ENCODE measurements at regions of chr13 and their contacts with region 1.

Region 1: DNA sequence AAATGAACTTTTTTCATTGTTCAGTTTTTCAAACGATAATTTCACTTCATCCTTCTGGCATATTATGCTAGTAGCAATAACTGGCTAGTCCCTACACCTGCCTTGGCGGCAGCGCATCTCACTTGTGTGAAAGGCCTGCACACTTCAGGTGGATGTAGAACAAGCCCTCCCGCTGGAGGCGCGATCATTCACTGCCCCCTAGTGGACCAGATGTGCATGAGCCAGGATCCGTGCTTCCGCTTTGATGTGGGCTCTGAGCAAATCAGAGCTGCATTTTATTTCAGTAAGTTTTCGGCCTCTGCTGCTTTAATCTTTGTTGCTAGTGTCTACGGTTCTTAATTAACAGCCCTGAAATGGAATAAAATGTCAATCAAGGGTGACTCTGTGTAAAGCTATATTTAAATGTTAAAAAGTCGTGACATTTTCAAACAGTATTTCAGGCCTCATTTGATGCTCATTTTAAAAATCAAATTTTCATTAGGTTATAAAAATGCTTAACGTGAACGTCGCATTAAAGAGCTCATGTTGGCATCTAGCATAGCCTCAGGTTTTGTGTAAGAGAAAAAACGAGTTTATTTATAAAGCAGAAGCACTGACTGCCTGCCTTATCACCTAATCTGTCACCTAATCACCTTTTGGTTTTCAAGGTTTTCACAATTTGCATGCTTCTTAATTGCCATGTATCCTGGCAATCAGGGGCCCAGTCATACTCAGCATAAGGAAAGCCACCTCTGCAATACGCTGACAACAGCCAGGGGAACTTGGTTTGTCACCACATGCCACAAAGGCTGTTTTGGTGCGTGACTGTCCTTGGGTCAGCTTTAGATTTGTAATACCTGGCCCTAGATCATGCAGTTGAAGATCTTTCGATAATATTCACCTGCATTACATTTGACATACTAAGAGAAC is 112.2 kb downstream of the TEX26 start:
- DNase-seq: no peak
- H3K4me3 ChIP-seq: no peak overlapping the region
- H3K27me3 ChIP-seq: no peaks in the 10 kb centered on the region
- CTCF ChIP-seq: peak; percentile 96

Region 2: GRCh38 chr13:30165796-30166195 is 878.8 kb before region 1 on chr13:
- CTCF ChIA-PET with region 1: no interaction called
- POLR2A ChIA-PET with region 1: no interaction called
- DNase-seq: no peak
- H3K4me3 ChIP-seq: no peak overlapping the region
- H3K27me3 ChIP-seq: peaks cover 5% of the 10 kb centered on the region
- CTCF ChIP-seq: no peak

Region 3: GRCh38 chr13:30808589-30808988 is 236.0 kb before region 1 on chr13:
- CTCF ChIA-PET with region 1: interaction called, 14 read pairs
- POLR2A ChIA-PET with region 1: no interaction called
- DNase-seq: no peak
- H3K4me3 ChIP-seq: no peak overlapping the region
- H3K27me3 ChIP-seq: no peaks in the 10 kb centered on the region
- CTCF ChIP-seq: no peak

Region 4: DNA sequence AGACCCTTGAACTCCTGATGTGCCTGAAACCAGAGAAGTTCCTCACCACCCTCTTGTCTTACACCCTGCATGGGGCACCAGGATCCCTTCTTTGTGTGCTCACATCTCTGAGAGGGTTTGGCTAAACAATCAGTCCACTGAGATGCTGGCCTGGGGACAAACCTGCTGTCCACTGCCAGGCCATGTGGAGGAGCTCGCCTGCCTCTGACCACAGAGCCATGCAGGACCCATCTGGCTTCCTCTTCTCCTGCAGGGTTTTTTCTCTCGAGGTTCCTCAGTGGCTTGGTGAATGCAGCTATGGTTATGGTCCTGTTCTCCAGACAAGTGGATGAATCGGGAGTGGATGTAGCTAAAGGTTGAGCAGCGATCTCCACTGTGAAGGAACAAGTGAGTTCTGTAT is 187.6 kb before region 1 on chr13:
- CTCF ChIA-PET with region 1: interaction called, 16 read pairs
- POLR2A ChIA-PET with region 1: no interaction called
- DNase-seq: no peak
- H3K4me3 ChIP-seq: no peak overlapping the region
- H3K27me3 ChIP-seq: no peaks in the 10 kb centered on the region
- CTCF ChIP-seq: peak; percentile 36

Region 5: DNA sequence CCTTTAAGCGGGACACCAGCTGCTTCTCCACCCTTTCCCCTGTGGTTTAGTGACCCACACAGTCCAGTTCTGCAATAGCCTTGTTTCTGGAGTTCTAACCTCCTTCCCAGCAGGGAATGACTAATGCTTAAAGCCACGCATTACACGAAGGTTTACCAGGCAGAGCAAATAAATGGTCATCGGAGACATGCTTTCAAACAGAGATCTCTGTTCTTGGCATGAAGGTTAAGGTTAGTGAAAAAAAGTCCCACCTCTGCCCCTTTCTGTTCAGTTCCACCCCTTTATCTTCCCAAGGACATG is 163.8 kb before region 1 on chr13:
- CTCF ChIA-PET with region 1: interaction called, 12 read pairs
- POLR2A ChIA-PET with region 1: interaction called, 3 read pairs
- DNase-seq: peak; percentile 79
- H3K4me3 ChIP-seq: no peak overlapping the region
- H3K27me3 ChIP-seq: no peaks in the 10 kb centered on the region
- CTCF ChIP-seq: no peak

Region 6: GRCh38 chr13:31032528-31033113 is 12.0 kb before region 1 on chr13:
- CTCF ChIA-PET with region 1: interaction called, 15 read pairs
- POLR2A ChIA-PET with region 1: no interaction called
- DNase-seq: no peak
- H3K4me3 ChIP-seq: no peak overlapping the region
- H3K27me3 ChIP-seq: peaks cover 6% of the 10 kb centered on the region
- CTCF ChIP-seq: no peak

Region 7: GRCh38 chr13:31081316-31081715 is 36.7 kb after region 1 on chr13:
- CTCF ChIA-PET with region 1: no interaction called
- POLR2A ChIA-PET with region 1: no interaction called
- DNase-seq: no peak
- H3K4me3 ChIP-seq: no peak overlapping the region
- H3K27me3 ChIP-seq: peaks cover 13% of the 10 kb centered on the region
- CTCF ChIP-seq: no peak

Region 8: DNA sequence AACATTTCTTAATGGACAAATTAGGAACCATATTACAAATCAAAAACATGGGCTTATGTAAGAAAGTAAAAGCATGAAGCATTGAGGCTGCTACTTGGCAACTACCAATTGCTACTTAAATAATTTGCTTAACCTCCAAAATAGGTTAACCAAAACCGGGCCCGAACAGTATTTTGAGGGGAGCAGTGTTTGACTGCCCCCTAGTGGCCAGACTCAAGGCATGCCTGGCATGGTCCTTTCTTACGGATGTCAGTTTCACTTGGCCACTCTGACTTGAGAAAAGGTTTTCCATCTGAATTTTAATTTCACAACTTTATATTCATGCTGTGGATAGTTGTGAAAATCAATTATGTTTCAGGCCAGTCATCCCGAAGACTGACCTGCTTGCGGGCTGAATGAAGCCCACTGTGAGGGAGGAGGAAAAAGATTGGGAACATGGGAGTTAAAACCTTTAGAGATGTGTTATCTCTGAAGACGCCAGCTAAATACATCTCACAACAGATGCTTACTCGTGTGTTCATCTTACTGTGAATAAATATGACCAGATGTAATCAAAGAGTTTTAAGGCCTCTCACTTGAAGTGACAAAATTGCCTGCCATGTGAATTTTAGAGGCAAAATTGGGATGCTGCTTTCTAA is 697.6 kb after region 1 on chr13:
- CTCF ChIA-PET with region 1: no interaction called
- POLR2A ChIA-PET with region 1: no interaction called
- DNase-seq: no peak
- H3K4me3 ChIP-seq: no peak overlapping the region
- H3K27me3 ChIP-seq: no peaks in the 10 kb centered on the region
- CTCF ChIP-seq: peak; percentile 97

Measured in BJ (cell line).